ENCODE measurements at regions of chr9 and their contacts with region 1.

Region 1: DNA sequence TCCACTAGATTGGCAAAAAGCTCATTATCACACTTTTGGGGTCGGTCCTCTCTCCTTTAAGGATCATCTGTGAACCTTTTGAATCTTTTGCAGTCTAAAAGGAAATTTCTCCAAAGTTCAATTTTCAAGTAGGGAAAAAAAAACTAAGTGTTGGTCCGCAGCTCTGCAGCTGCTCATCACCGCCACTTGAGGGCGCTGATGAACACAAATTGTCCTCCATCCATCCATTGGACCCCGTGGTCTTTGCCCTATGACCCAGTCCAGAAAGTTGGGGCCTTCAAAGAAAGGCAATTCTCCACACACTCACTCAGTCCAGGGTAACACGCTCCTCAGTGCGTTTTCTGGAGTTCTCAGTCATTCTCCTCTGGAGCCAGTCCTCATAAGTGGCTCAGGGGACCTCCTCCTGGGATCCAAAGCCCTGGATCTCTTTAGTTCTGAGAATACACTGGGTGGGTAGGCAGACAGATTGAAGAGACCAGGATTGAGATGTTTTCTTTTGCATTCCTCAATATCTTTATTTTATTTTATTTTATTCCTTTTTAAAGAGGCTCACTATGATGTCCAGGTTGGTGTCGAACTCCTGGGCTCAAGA is 63.6 kb upstream of the SLC28A3 start:
- DNase-seq: no peak
- ATAC-seq: no peak

Region 2: DNA sequence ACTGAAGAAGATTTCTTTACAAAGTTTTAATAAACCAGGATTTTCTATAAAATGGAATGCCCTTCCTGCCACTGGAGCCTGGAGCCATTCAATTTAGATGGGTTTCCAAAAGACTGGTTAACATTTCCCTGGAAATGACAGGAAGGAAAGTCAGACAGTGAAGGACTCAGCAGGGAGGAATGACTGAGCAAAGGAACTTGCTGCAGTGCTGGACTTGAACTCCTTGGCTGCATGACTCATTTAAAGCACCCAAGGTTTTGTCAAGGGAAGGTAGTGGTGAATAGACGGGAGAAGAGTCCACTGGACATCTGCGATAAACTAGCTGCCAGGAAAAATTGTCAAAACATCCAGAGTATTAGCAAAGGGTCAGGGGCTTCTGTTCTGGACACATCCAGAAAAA is 100.2 kb after region 1 on chr9:
- intact Hi-C with region 1: no loop called
- DNase-seq: no peak
- ATAC-seq: no peak

Region 3: DNA sequence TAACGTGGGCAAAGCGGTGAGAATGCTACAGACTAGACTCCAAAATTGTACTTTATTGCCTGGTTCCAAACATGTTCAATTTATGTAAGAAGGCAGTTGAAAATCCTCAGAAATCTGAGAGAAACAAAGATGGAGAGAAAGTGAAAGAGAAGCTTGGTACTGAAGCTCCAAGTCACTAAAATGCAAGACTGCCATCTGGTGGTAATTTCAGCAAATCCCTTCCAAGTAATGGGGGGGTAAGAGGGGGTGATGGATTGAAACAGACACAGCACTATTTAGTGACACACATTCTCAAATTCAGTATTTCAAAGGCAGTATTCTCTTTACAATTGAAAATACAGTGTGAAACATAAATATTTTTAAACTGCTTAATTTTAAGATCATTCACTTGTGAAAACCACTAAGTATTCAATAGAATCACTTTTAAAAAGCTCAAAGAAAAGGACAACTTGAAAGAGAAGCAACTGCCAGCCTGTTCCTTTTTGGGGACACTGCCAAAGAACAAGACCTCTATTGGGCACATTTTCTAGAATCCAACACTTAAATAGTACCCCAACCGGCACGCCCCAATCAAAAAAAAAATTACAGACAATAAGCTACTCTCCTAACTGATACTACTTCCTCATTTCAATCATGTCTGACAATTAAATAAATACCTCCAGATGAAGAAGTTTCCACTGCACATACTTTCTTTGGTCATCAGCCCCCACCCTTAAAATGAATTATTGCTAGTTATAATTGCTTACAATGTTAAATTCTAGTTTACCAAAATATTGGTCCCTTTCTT is 1206.1 kb after region 1 on chr9:
- intact Hi-C with region 1: loop called (anchors 10 kb)
- DNase-seq: no peak
- ATAC-seq: peak; percentile 70

Measured in left ventricle myocardium superior (tissue), 1 donor.